Transverse colon (tissue), 4 donors: ENCODE measurements at regions of chr9 and their contacts with region 1.

Region 1: GRCh38 chr9:92133949-92134604 is 18.9 kb upstream of the SPTLC1 start:
- DNase-seq: peak; percentile 79
- H3K4me3 ChIP-seq: no peak overlapping the region
- H3K27ac ChIP-seq: peak overlapping the region in 2 of 4 donors; percentile 21 to 23
- H3K4me1 ChIP-seq: peaks cover 0 to 7% (median 3%) of the 10 kb centered on the region in 4 donors
- H3K27me3 ChIP-seq: peaks cover 4% of the 10 kb centered on the region
- CTCF ChIP-seq: peak; percentile 76 to 95 (median 92)
- EP300 ChIP-seq: no peak
- POLR2A ChIP-seq: no peak

Region 2: DNA sequence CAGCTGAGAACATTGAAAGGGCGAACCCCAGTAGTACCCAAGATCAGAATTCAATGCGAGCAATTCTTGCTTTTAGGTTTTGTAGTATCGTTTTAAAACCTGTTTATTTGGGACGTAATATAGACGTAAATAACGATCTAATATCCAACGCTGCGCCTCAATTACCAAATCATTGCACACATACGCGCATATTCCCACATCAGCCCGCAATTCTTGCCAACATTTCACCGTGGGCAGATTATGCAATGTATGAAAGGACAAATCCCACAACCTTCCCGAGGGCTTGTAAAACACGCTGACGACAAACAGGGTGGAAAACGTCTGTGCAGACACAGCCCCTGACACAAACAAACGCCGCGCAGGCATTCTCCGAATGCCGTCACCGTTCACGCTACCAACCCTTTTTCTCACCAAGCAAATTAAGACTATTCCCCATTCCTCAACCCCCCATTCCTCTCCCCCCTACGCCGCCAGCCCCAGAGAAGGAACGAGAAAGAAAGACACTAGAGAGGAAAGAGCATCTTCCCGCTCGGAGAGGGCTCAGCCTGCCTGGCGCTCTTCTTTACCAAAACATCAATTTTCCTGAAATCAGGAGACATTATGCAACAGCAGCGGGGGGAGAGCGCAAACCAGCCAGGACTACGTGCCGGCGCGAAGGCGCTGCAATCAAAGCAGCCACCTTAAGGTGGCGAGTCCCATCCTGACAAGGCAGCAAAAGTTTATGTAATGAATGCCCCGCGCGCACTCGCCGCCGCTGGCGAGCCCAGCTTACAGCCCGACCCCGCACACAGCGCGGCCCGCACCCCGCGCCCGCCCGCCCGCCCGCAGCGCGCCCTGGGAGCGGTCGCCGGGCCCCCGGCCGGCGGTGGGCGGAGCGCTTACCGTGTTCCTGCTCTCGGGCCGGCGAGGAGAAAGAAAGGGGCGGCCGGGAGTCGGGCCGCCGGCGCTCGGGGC is 711.0 kb before region 1 on chr9:
- in situ Hi-C with region 1: no loop called
- intact Hi-C with region 1: no loop called
- DNase-seq: peak; percentile 75
- H3K4me3 ChIP-seq: peak overlapping the region; percentile 60 to 83 (median 69)
- H3K27ac ChIP-seq: peak overlapping the region; percentile 93 to 98 (median 94)
- H3K4me1 ChIP-seq: peaks cover 12 to 53% (median 42%) of the 10 kb centered on the region in 4 donors
- H3K27me3 ChIP-seq: peaks cover 6% of the 10 kb centered on the region
- CTCF ChIP-seq: peak in 2 of 5 experiments; percentile 13 to 31
- EP300 ChIP-seq: peak; percentile 98
- POLR2A ChIP-seq: peak; percentile 65

Region 3: GRCh38 chr9:92242260-92243136 is 108.4 kb after region 1 on chr9:
- in situ Hi-C with region 1: loop called in 1 of 4 experiments (anchors 25 kb)
- intact Hi-C with region 1: no loop called
- DNase-seq: no peak
- H3K4me3 ChIP-seq: no peak overlapping the region
- H3K27ac ChIP-seq: no peak overlapping the region
- H3K4me1 ChIP-seq: no peaks in the 10 kb centered on the region
- H3K27me3 ChIP-seq: no peaks in the 10 kb centered on the region
- CTCF ChIP-seq: no peak
- EP300 ChIP-seq: no peak
- POLR2A ChIP-seq: no peak

Region 4: GRCh38 chr9:92293452-92294296 is 159.6 kb after region 1 on chr9 and contains the start of gene IARS1:
- in situ Hi-C with region 1: no loop called
- intact Hi-C with region 1: loop called (anchors 10 kb)
- DNase-seq: peak; percentile 99
- H3K4me3 ChIP-seq: peak within 1 kb of the TSS; percentile 58 to 86 (median 72)
- H3K27ac ChIP-seq: peak within 1 kb of the TSS; percentile 79 to 85 (median 82)
- H3K4me1 ChIP-seq: peaks cover 7 to 31% (median 17%) of the 10 kb centered on the region in 4 donors
- H3K27me3 ChIP-seq: no peaks in the 10 kb centered on the region
- CTCF ChIP-seq: peak in 4 of 5 experiments; percentile 13 to 43 (median 16)
- EP300 ChIP-seq: no peak
- POLR2A ChIP-seq: peak; percentile 73
- total RNA-seq, gene IARS1: 25.4 to 70.7 (median 48.0) TPM

Region 5: GRCh38 chr9:92438900-92439526 is 304.9 kb after region 1 on chr9:
- in situ Hi-C with region 1: loop called in 2 of 4 experiments (anchors 25 kb)
- intact Hi-C with region 1: no loop called
- DNase-seq: no peak
- H3K4me3 ChIP-seq: no peak overlapping the region
- H3K27ac ChIP-seq: no peak overlapping the region
- H3K4me1 ChIP-seq: peaks cover 0 to 3% (median 0%) of the 10 kb centered on the region in 4 donors
- H3K27me3 ChIP-seq: no peaks in the 10 kb centered on the region
- CTCF ChIP-seq: peak; percentile 31 to 55 (median 46)
- EP300 ChIP-seq: no peak
- POLR2A ChIP-seq: no peak

Region 6: DNA sequence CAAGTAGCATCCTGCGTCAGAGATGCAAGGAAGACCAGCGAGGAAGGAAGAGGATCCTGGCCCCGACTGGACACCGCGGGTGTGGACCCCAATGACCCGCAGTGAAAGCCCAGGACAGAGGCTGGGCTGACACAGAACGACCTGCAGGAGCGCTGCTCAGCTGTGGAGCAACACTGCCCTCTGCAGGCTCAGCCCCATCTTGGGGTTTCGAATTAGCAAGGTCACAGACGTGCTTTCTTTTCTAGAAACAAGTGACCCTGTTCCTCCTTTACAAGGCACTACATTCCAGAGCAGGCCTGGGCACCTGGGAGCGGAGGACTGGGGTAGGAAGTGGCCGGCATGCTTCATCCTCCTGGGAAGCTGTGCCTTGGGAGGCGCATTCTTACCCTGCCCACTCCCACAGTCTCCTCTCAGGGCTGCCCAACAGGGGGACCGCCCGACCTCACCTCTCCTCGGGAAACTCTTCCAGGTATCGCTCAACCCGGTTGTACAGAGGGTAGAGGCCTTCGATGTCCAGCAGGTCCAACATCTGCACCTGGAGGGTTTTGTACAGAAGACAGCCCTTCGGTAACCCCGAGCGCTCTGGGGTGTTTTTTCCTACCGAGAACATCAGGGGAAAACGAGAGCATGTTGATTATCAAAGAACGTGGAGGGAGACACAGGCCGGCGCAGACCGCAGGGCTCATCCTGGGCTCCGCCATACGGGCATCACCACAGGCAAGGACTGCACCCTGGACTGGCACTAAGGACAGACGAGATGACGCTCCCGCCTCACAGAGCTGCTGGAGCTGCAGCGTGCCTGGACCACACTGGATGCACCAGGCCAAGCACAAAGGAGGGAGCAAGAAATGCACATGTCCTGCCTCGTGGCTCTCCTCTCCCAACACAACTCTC is 500.9 kb after region 1 on chr9:
- in situ Hi-C with region 1: loop called in 3 of 4 experiments (anchors 10 to 25 kb)
- intact Hi-C with region 1: no loop called
- DNase-seq: peak; percentile 77
- H3K4me3 ChIP-seq: no peak overlapping the region
- H3K27ac ChIP-seq: no peak overlapping the region
- H3K4me1 ChIP-seq: peaks cover 0 to 2% (median 0%) of the 10 kb centered on the region in 4 donors
- H3K27me3 ChIP-seq: no peaks in the 10 kb centered on the region
- CTCF ChIP-seq: peak; percentile 88 to 95 (median 93)
- EP300 ChIP-seq: no peak
- POLR2A ChIP-seq: no peak

Region 7: GRCh38 chr9:92790542-92791527 is 656.8 kb after region 1 on chr9:
- in situ Hi-C with region 1: loop called in 1 of 4 experiments (anchors 25 kb)
- intact Hi-C with region 1: no loop called
- DNase-seq: peak; percentile 85
- H3K4me3 ChIP-seq: no peak overlapping the region
- H3K27ac ChIP-seq: no peak overlapping the region
- H3K4me1 ChIP-seq: no peaks in the 10 kb centered on the region
- H3K27me3 ChIP-seq: peaks cover 14% of the 10 kb centered on the region
- CTCF ChIP-seq: peak; percentile 80 to 91 (median 86)
- EP300 ChIP-seq: no peak
- POLR2A ChIP-seq: no peak